Dorsolateral prefrontal cortex (tissue), 120 donors: ENCODE measurements at regions of chr14 and their contacts with region 1.

Region 1: GRCh38 chr14:73633116-73634010 is 11.4 kb upstream of the DNAL1 start:
- DNase-seq: peak; percentile 41 to 71 (median 62)
- H3K4me3 ChIP-seq: peak overlapping the region; percentile 47 to 87 (median 73)
- H3K27ac ChIP-seq: peak overlapping the region in 54 of 59 donors; percentile 8 to 91 (median 76)
- H3K27me3 ChIP-seq: no peaks in the 10 kb centered on the region
- CTCF ChIP-seq: peak; percentile 70 to 93 (median 86)

Region 2: GRCh38 chr14:73491256-73492042 is 141.9 kb before region 1 on chr14:
- intact Hi-C with region 1: loop called in 1 of 2 experiments (anchors 10 kb)
- DNase-seq: peak in 9 of 10 donors; percentile 33 to 72 (median 61)
- H3K4me3 ChIP-seq: peak overlapping the region; percentile 62 to 90 (median 80)
- H3K27ac ChIP-seq: peak overlapping the region in 57 of 59 donors; percentile 19 to 93 (median 84)
- H3K27me3 ChIP-seq: no peaks in the 10 kb centered on the region
- CTCF ChIP-seq: no peak

Region 3: DNA sequence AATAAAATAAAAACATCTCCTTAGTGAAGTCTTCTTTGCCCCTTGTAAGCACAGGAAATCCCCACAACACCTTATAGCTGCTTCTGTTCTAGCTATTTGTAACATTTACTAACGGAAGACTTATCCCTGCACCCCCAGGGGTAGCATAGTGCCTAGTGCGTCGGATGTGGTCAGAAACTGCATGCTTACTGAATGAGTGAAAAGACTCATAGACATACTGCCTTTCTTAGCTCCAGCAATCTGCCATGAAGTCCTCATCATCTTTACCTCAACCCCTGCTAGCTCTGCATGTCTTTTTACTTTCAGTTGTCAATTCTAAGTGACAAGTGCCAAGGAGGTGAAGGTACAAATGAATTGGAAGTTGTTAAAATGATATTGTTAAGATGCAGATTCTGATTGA is 129.7 kb before region 1 on chr14:
- intact Hi-C with region 1: loop called (anchors 5 to 10 kb)
- DNase-seq: no peak
- H3K4me3 ChIP-seq: no peak overlapping the region
- H3K27ac ChIP-seq: no peak overlapping the region
- H3K27me3 ChIP-seq: no peaks in the 10 kb centered on the region
- CTCF ChIP-seq: no peak

Region 4: DNA sequence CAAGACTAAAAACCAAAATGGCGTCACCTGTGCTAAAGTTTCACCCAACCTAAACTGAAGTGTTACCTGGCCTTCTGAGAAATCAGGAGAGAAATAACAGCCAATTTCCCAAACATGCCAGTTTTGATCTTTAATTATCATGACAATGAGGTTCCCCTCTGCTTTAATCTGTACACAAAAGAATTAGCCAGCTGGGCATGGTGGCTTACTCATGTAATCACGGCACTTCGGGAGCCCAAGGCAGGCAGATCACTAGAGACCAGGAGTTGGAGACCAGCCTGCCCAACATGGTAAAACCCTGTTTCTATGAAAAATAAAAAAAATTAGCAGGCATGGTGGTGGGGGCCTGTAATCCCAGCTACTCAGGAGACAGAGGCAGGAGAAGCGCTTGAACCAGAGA is 79.5 kb before region 1 on chr14:
- intact Hi-C with region 1: no loop called
- DNase-seq: no peak
- H3K4me3 ChIP-seq: no peak overlapping the region
- H3K27ac ChIP-seq: no peak overlapping the region
- H3K27me3 ChIP-seq: no peaks in the 10 kb centered on the region
- CTCF ChIP-seq: no peak

Region 5: DNA sequence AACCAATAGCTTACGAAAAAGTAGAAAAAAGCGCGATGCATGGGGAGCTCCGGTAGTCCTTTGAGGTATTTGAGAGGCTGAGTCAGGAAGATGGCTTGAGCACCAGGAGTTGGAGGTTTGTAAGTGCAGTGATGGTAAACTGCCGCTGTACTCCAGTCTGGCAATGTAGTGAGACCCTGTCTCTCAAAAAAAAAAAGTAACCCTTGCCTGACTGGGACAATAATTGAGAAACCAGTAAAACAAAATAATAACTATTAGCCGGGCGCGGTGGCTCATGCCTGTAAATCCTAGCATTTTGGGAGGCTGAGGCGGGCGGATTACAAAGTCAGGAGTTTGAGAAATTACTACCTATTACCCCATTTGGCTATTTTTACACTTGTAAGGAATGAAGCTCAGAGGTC is 65.0 kb before region 1 on chr14:
- intact Hi-C with region 1: loop called in 1 of 2 experiments (anchors 5 kb)
- DNase-seq: peak in 2 of 10 donors; percentile 5 to 23
- H3K4me3 ChIP-seq: peak overlapping the region; percentile 44 to 81 (median 71)
- H3K27ac ChIP-seq: peak overlapping the region in 51 of 59 donors; percentile 45 to 94 (median 85)
- H3K27me3 ChIP-seq: no peaks in the 10 kb centered on the region
- CTCF ChIP-seq: no peak

Region 6: GRCh38 chr14:73599499-73599898 is 33.9 kb before region 1 on chr14:
- intact Hi-C with region 1: no loop called
- DNase-seq: no peak
- H3K4me3 ChIP-seq: no peak overlapping the region
- H3K27ac ChIP-seq: no peak overlapping the region
- H3K27me3 ChIP-seq: no peaks in the 10 kb centered on the region
- CTCF ChIP-seq: no peak

Region 7: DNA sequence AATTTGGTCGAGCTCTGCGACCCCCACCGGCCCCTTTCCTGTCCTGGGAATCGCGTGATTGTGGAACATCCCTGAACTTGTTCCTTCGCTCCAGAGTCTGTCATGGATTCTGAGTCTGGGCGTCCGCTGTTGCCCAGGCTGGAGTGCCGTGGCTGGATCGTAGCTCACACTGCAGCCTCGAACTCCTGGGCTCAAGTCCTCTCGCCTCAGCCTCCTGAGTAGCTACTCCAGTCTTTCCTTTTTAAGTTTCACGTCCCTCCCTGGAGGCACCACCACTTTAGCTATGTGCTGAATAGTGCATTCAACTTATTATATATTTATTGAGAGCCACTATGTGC is 20.3 kb before region 1 on chr14:
- intact Hi-C with region 1: no loop called
- DNase-seq: no peak
- H3K4me3 ChIP-seq: peak overlapping the region; percentile 49 to 81 (median 69)
- H3K27ac ChIP-seq: peak overlapping the region in 53 of 59 donors; percentile 9 to 94 (median 81)
- H3K27me3 ChIP-seq: no peaks in the 10 kb centered on the region
- CTCF ChIP-seq: peak in 1 of 56 donors; percentile 8

Region 8: DNA sequence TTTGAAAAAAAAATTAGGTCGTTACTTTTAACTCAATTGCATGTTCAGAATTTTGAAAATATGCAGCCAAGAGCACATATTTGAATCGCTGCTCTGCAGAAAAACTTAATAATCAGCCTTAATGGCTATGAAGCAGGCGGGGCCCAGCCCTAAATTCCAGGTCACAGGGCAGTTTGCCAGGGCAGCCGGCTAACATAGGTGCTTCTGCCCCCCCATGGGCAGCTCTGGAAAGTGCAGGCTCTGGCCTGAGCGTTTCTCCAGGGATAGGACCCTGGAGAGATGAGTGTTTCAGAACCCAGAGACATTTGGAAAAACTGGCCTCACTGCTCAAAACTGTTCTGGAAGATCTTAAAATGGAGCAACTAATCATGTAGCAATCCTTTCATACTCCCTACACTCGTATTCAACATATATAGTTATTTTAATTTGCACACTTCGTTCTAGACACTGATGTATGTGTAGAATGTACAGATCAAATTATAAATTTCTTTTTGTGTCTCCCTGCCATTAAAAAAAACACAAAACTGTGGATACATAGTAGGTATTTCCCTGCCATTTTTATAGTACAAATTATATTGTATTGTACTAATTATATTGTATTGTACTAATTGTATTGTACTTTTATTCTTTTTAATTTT is 192.3 kb after region 1 on chr14:
- intact Hi-C with region 1: no loop called
- DNase-seq: peak; percentile 65 to 87 (median 80)
- H3K4me3 ChIP-seq: peak overlapping the region in 2 of 59 donors; percentile 3 to 5
- H3K27ac ChIP-seq: peak overlapping the region in 6 of 59 donors; percentile 6 to 39 (median 27)
- H3K27me3 ChIP-seq: no peaks in the 10 kb centered on the region
- CTCF ChIP-seq: peak; percentile 78 to 99 (median 93)